Activated CD8-positive, alpha-beta T cell treated with anti-CD3 and anti-CD28 coated beads, Interleukin-2, amount 10 ng/mL, durations not matched to agents 7 days and 5 days (primary cell): ENCODE measurements at regions of chr6 and their contacts with region 1.

Region 1: GRCh38 chr6:33417903-33418689 is at the start of gene CUTA:
- DNase-seq: peak; percentile 100
- ATAC-seq: peak; percentile 92
- H3K4me3 Mint-ChIP-seq: peak within 1 kb of the TSS; percentile 96
- H3K27ac Mint-ChIP-seq: peak within 1 kb of the TSS; percentile 98
- H3K4me1 Mint-ChIP-seq: peaks cover 60% of the 10 kb centered on the region
- H3K27me3 Mint-ChIP-seq: peaks cover 7% of the 10 kb centered on the region
- total RNA-seq, gene CUTA: 179 to 187 TPM

Region 2: GRCh38 chr6:33271458-33272274 is 146.4 kb before region 1 on chr6 and contains the starts of genes RPS18 and VPS52:
- CTCF ChIA-PET with region 1: no interaction called
- POLR2A ChIA-PET with region 1: interaction called, 12 read pairs
- DNase-seq: peak; percentile 96
- ATAC-seq: peak; percentile 84
- H3K4me3 Mint-ChIP-seq: peak within 1 kb of the TSS; percentile 99
- H3K27ac Mint-ChIP-seq: peak within 1 kb of the TSS; percentile 100
- H3K4me1 Mint-ChIP-seq: peaks cover 52% of the 10 kb centered on the region
- H3K27me3 Mint-ChIP-seq: no peaks in the 10 kb centered on the region
- total RNA-seq, gene RPS18: 2,792 to 2,813 TPM
- total RNA-seq, gene VPS52: 59.3 to 59.5 TPM

Region 3: DNA sequence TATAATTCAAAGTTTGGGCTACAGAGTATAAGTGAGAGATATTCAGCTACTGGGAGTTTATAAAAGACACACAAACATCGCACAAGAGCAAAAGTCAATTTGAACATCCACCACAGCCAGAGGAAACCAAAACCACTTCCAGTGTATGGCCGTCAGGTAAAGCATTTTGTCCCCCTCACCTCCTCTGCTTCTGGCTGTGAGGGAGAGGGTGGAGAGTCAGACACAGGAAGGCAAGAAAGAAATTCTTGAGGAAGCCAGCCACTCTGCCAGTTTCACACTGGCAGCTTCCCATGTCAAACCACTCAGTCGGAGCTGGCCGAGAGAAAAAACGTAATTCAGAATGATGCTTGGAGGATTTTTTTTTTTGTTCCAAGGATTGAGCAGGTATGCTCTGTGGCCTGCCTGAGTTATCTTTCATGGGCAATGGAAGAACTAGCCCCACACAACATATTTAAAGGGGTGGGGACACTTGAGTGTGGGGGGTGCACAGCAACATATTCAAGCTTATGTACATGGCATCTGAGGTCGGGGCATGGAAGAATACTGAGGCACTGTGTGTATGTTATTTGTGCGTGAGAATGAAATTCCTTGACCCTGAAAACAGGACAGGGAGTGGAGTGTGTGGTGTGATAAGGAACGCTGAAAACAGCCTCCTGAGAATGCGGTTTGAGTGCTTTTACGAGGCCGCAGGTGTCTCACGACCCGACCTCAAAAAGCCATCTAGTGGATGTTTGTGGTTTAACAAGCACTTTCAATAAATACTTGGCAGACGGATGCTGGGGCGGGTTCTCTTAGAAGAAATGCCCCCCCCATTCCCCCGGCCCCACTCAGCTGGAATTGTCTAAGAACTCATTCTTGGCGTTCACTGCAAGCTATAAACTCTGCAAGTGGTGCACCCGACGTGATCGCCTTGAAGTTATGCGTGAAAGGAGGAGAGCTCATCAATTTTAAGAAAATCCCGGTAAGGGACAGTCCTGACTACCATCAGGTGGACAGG is 73.1 kb before region 1 on chr6:
- CTCF ChIA-PET with region 1: interaction called, 6 read pairs
- POLR2A ChIA-PET with region 1: interaction called, 10 read pairs
- DNase-seq: peak; percentile 85
- ATAC-seq: peak; percentile 68
- H3K4me3 Mint-ChIP-seq: peak overlapping the region; percentile 69
- H3K27ac Mint-ChIP-seq: peak overlapping the region; percentile 94
- H3K4me1 Mint-ChIP-seq: peaks cover 40% of the 10 kb centered on the region
- H3K27me3 Mint-ChIP-seq: no peaks in the 10 kb centered on the region

Region 4: GRCh38 chr6:33430991-33431879 is 13.1 kb after region 1 on chr6:
- CTCF ChIA-PET with region 1: interaction called, 21 read pairs
- POLR2A ChIA-PET with region 1: interaction called, 23 read pairs
- DNase-seq: peak; percentile 93
- ATAC-seq: peak; percentile 67
- H3K4me3 Mint-ChIP-seq: peak overlapping the region; percentile 84
- H3K27ac Mint-ChIP-seq: peak overlapping the region; percentile 86
- H3K4me1 Mint-ChIP-seq: peaks cover 65% of the 10 kb centered on the region
- H3K27me3 Mint-ChIP-seq: no peaks in the 10 kb centered on the region

Region 5: DNA sequence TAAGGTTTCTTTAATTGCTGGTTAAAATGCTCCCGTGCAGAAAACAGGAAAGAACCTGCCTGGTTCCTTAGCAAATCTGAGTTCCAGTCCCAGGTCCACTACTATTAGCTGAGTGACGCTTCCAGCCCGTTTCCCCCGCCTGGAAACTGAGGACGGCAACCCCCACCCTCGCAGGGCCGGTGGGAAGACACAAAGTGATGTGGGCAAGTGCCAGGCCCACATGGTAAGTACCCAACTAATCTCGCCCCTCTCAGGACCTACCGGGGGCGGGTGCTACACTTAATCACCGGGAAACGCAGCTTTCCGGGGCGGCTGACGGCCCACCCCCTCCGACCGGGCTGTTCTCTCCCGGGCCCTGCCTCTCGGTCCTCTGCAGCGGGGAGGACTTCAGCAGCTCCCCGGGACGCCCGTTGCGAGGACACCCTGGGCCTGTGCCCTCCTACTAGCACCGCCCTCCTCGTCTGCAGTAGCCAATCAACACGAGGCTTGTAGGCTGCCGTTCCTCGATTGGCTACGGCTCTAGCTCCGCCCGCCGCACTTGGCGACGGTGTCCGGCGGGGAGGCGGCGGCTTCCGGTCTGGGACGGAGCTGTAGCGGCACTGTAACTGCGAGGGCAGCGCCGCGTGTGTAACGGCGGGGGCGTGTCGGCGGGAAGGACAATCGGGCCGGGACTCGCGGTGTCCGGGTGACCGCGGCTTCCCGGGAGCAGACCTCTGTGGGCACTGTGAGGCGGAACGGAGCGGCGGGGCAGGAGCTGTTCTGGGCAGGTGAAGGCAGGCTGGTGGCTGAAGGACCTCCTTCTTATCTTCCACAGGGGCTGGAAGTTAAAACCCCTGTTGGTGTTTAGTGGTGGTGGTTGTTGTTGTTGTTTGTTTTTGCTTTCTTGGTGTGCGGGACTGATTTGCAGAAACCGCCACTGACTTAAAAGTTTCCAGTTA is 36.2 kb after region 1 on chr6 and contains the start of gene ZBTB9:
- CTCF ChIA-PET with region 1: interaction called, 3 read pairs
- POLR2A ChIA-PET with region 1: interaction called, 12 read pairs
- DNase-seq: peak; percentile 97
- ATAC-seq: peak; percentile 99
- H3K4me3 Mint-ChIP-seq: peak within 1 kb of the TSS; percentile 94
- H3K27ac Mint-ChIP-seq: peak within 1 kb of the TSS; percentile 88
- H3K4me1 Mint-ChIP-seq: peaks cover 29% of the 10 kb centered on the region
- H3K27me3 Mint-ChIP-seq: peaks cover 2% of the 10 kb centered on the region
- total RNA-seq, gene ZBTB9: 7.3 to 9.0 TPM

Region 6: GRCh38 chr6:33570806-33571636 is 152.9 kb after region 1 on chr6:
- CTCF ChIA-PET with region 1: no interaction called
- POLR2A ChIA-PET with region 1: interaction called, 14 read pairs
- DNase-seq: peak; percentile 98
- ATAC-seq: peak; percentile 94
- H3K4me3 Mint-ChIP-seq: peak overlapping the region; percentile 83
- H3K27ac Mint-ChIP-seq: peak overlapping the region; percentile 100
- H3K4me1 Mint-ChIP-seq: peaks cover 54% of the 10 kb centered on the region
- H3K27me3 Mint-ChIP-seq: no peaks in the 10 kb centered on the region

Region 7: GRCh38 chr6:33717934-33718455 is 299.9 kb after region 1 on chr6:
- CTCF ChIA-PET with region 1: no interaction called
- POLR2A ChIA-PET with region 1: no interaction called
- DNase-seq: no peak
- ATAC-seq: no peak
- H3K4me3 Mint-ChIP-seq: no peak overlapping the region
- H3K27ac Mint-ChIP-seq: no peak overlapping the region
- H3K4me1 Mint-ChIP-seq: no peaks in the 10 kb centered on the region
- H3K27me3 Mint-ChIP-seq: peaks cover 26% of the 10 kb centered on the region